Brain microvascular endothelial cell (primary cell): ENCODE measurements at regions of chr5 and their contacts with region 1.

Region 1: GRCh38 chr5:139696894-139697658 is 48.9 kb downstream of the CXXC5 start:
- DNase-seq: peak; percentile 88
- H3K4me3 ChIP-seq: peak overlapping the region; percentile 35
- H3K27ac ChIP-seq: peak overlapping the region; percentile 94
- H3K27me3 ChIP-seq: no peaks in the 10 kb centered on the region
- CTCF ChIP-seq: no peak

Region 2: GRCh38 chr5:139312075-139312474 is 385.0 kb before region 1 on chr5:
- in situ Hi-C with region 1: no loop called
- DNase-seq: no peak
- H3K4me3 ChIP-seq: no peak overlapping the region
- H3K27ac ChIP-seq: no peak overlapping the region
- H3K27me3 ChIP-seq: no peaks in the 10 kb centered on the region
- CTCF ChIP-seq: no peak

Region 3: GRCh38 chr5:139755892-139756671 is 59.0 kb after region 1 on chr5:
- in situ Hi-C with region 1: loop called (anchors 10 kb)
- DNase-seq: no peak
- H3K4me3 ChIP-seq: no peak overlapping the region
- H3K27ac ChIP-seq: no peak overlapping the region
- H3K27me3 ChIP-seq: peaks cover 23% of the 10 kb centered on the region
- CTCF ChIP-seq: no peak